ENCODE measurements at regions of chr9 and their contacts with region 1.

Region 1: DNA sequence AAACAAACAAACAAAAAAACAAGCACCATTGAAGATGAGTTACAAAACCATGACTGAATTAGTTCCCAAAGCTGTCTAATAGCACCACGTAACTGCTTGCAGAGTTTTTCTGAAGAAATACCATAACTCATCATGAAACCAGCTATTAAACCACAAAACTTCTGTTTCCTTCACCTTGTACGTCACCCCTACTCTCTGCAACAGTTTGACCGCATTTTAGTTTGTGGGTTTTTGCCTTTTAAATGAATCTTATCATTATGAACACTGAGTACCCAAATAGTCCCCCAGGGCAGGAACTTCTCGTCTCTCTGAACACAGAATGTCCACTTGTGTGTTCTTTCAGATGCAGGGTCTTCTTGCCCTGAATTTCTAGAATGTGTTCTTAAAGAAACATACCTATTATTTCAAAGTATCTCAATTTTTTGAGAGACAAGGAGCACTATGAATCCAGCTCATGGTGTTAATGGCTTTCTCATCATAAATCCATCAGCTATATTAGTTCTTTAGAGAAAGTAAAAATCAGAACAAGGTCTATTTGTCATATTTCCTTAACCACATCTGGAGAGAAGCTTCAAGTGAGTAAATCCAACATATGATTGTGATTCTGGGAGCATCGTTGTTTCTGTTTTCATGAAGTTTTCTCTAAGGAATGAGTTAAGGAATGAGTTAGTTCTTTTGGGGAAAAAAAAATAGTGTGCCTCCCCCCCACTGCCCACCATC is 210.6 kb downstream of the AUH start:
- DNase-seq: peak in 8 of 9 donors; percentile 44 to 82 (median 71)
- ATAC-seq: peak; percentile 88
- H3K4me3 ChIP-seq: peak overlapping the region; percentile 17
- H3K4me3 Mint-ChIP-seq: peak overlapping the region; percentile 3 to 68 (median 50)
- H3K27ac ChIP-seq: no peak overlapping the region
- H3K27ac Mint-ChIP-seq: peak overlapping the region in 6 of 9 donors; percentile 44 to 93 (median 72)
- H3K4me1 ChIP-seq: peaks cover 17 to 24% of the 10 kb centered on the region in 2 donors
- H3K4me1 Mint-ChIP-seq: peaks cover 25 to 89% (median 35%) of the 10 kb centered on the region in 7 donors
- H3K27me3 ChIP-seq: no peaks in the 10 kb centered on the region
- H3K27me3 Mint-ChIP-seq: no peaks in the 10 kb centered on the region

Region 2: GRCh38 chr9:90165281-90165680 is 985.9 kb before region 1 on chr9:
- CTCF ChIA-PET with region 1: no interaction called
- POLR2A ChIA-PET with region 1: no interaction called
- intact Hi-C with region 1: no loop called
- DNase-seq: no peak
- ATAC-seq: no peak
- H3K4me3 ChIP-seq: no peak overlapping the region
- H3K4me3 Mint-ChIP-seq: no peak overlapping the region
- H3K27ac ChIP-seq: no peak overlapping the region
- H3K27ac Mint-ChIP-seq: no peak overlapping the region
- H3K4me1 ChIP-seq: no peaks in the 10 kb centered on the region
- H3K4me1 Mint-ChIP-seq: peaks cover 0 to 5% (median 0%) of the 10 kb centered on the region in 7 donors
- H3K27me3 ChIP-seq: no peaks in the 10 kb centered on the region
- H3K27me3 Mint-ChIP-seq: peaks cover 0 to 14% (median 4%) of the 10 kb centered on the region in 5 donors

Region 3: DNA sequence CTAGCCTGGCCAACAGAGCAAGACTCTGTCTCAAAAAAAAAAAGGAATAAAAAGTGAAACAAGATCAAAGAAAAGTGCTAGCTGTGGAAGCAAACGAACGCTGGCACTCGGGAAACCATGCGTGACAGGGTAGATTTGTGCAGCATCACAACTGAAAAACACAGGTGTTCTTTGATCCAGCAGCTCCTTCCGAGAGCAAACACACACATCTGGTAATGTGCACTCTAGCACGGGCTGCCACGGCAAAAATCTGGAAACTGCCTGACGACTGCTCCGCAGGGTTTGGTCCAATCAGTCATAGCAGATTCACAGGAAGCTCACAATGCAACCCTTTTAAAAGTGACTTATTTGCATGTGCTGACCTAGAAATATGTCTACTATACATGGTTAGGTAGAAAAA is 269.5 kb before region 1 on chr9:
- CTCF ChIA-PET with region 1: no interaction called
- POLR2A ChIA-PET with region 1: no interaction called
- intact Hi-C with region 1: no loop called
- DNase-seq: no peak
- ATAC-seq: no peak
- H3K4me3 ChIP-seq: no peak overlapping the region
- H3K4me3 Mint-ChIP-seq: no peak overlapping the region
- H3K27ac ChIP-seq: no peak overlapping the region
- H3K27ac Mint-ChIP-seq: no peak overlapping the region
- H3K4me1 ChIP-seq: no peaks in the 10 kb centered on the region
- H3K4me1 Mint-ChIP-seq: no peaks in the 10 kb centered on the region
- H3K27me3 ChIP-seq: no peaks in the 10 kb centered on the region
- H3K27me3 Mint-ChIP-seq: peaks cover 0 to 4% (median 0%) of the 10 kb centered on the region in 5 donors

Region 4: GRCh38 chr9:90921111-90921510 is 230.0 kb before region 1 on chr9:
- CTCF ChIA-PET with region 1: no interaction called
- POLR2A ChIA-PET with region 1: no interaction called
- intact Hi-C with region 1: no loop called
- DNase-seq: no peak
- ATAC-seq: no peak
- H3K4me3 ChIP-seq: no peak overlapping the region
- H3K4me3 Mint-ChIP-seq: no peak overlapping the region
- H3K27ac ChIP-seq: no peak overlapping the region
- H3K27ac Mint-ChIP-seq: no peak overlapping the region
- H3K4me1 ChIP-seq: no peaks in the 10 kb centered on the region
- H3K4me1 Mint-ChIP-seq: peaks cover 0 to 1% (median 0%) of the 10 kb centered on the region in 7 donors
- H3K27me3 ChIP-seq: no peaks in the 10 kb centered on the region
- H3K27me3 Mint-ChIP-seq: peaks cover 8 to 22% (median 17%) of the 10 kb centered on the region in 5 donors

Region 5: GRCh38 chr9:90985631-90986030 is 165.5 kb before region 1 on chr9:
- CTCF ChIA-PET with region 1: no interaction called
- POLR2A ChIA-PET with region 1: no interaction called
- intact Hi-C with region 1: no loop called
- DNase-seq: no peak
- ATAC-seq: no peak
- H3K4me3 ChIP-seq: no peak overlapping the region
- H3K4me3 Mint-ChIP-seq: no peak overlapping the region
- H3K27ac ChIP-seq: no peak overlapping the region
- H3K27ac Mint-ChIP-seq: no peak overlapping the region
- H3K4me1 ChIP-seq: no peaks in the 10 kb centered on the region
- H3K4me1 Mint-ChIP-seq: peaks cover 0 to 3% (median 0%) of the 10 kb centered on the region in 7 donors
- H3K27me3 ChIP-seq: no peaks in the 10 kb centered on the region
- H3K27me3 Mint-ChIP-seq: peaks cover 0 to 9% (median 5%) of the 10 kb centered on the region in 5 donors

Region 6: GRCh38 chr9:91047993-91048607 is 103.1 kb before region 1 on chr9:
- CTCF ChIA-PET with region 1: no interaction called
- POLR2A ChIA-PET with region 1: no interaction called
- intact Hi-C with region 1: loop called in 1 of 2 experiments (anchors 1 kb)
- DNase-seq: peak in 1 of 9 donors; percentile 39
- ATAC-seq: peak; percentile 14
- H3K4me3 ChIP-seq: no peak overlapping the region
- H3K4me3 Mint-ChIP-seq: peak overlapping the region; percentile 55 to 78 (median 66)
- H3K27ac ChIP-seq: no peak overlapping the region
- H3K27ac Mint-ChIP-seq: peak overlapping the region in 6 of 9 donors; percentile 28 to 88 (median 41)
- H3K4me1 ChIP-seq: peaks cover 5 to 7% of the 10 kb centered on the region in 2 donors
- H3K4me1 Mint-ChIP-seq: peaks cover 9 to 55% (median 19%) of the 10 kb centered on the region in 7 donors
- H3K27me3 ChIP-seq: peaks cover 0 to 5% of the 10 kb centered on the region in 2 donors
- H3K27me3 Mint-ChIP-seq: peaks cover 11 to 34% (median 23%) of the 10 kb centered on the region in 5 donors

Region 7: DNA sequence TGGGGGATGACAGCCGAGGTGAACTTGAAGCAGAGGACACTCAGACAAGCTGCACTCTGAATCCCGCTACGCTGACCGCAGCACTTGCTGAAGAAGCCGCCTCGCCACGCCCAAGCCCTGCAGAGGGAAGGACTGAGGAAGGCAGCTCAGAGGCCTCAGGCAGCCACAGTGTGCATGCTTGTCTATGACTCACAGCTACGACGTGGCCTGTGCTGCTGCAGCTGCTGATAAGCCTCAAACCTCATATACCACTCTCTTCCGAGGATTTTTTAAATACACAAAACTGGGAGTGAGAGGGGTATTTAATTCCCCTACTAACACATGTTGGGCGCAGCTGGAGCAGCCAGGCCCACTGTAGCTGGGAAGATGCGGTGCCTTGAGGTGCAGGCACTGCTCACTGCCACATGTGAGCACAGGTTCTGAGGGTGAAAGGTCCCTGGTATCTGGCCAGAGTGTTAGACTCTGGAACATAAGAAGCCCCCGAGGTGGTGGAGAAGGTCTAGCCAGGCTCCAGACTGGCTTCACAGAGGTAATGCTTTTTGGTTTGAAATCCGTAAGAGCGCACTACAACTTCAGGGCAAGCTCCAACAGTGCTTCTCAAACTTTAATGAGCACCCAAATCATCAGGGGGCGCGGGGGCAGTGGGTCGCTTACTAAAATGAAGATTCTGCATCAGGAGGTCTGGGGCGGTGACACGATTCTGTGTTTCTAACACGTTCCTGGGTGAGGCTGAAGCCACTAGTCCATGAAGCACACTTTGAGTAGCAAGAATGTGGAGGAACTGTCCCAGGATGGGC is 13.8 kb after region 1 on chr9:
- CTCF ChIA-PET with region 1: no interaction called
- POLR2A ChIA-PET with region 1: no interaction called
- intact Hi-C with region 1: loop called in 1 of 2 experiments (anchors 1 kb)
- DNase-seq: peak in 1 of 9 donors; percentile 78
- ATAC-seq: peak; percentile 90
- H3K4me3 ChIP-seq: no peak overlapping the region
- H3K4me3 Mint-ChIP-seq: peak overlapping the region in 2 of 10 donors; percentile 6 to 89
- H3K27ac ChIP-seq: no peak overlapping the region
- H3K27ac Mint-ChIP-seq: peak overlapping the region in 2 of 9 donors; percentile 72 to 97
- H3K4me1 ChIP-seq: peaks cover 15 to 38% of the 10 kb centered on the region in 2 donors
- H3K4me1 Mint-ChIP-seq: peaks cover 13 to 63% (median 35%) of the 10 kb centered on the region in 7 donors
- H3K27me3 ChIP-seq: no peaks in the 10 kb centered on the region
- H3K27me3 Mint-ChIP-seq: no peaks in the 10 kb centered on the region

Region 8: DNA sequence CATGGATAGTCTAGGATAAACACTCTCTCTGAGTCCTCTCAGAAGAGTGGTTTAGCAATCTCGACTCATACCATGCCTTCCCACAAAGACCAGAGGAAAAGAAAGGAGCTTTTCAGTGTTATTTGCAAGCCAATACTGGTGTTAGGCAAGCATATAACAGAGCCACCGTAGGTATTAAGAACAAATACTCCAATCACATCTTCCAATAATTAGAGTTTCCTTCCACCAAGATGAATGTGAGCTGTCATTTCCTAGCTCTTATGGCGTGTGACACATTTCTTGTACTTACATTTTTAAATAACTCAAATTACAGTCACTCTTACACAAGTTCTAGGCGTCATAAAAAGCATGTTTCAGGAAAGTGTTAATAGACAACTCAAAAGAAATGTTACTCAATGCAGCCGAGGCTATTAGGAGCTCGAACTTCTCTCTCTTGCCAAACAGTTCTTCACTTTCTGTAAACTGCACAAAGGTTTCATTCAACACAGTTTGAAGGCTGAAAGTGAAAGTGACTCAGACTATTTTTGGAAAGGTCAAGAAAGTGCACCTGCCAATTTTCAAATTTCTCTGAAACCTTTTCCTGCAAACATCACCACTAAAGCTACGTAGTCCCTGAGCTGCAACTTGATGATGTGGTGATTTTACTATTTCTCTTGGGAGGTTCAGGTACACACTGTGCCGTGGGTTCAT is 56.7 kb after region 1 on chr9:
- CTCF ChIA-PET with region 1: no interaction called
- POLR2A ChIA-PET with region 1: no interaction called
- intact Hi-C with region 1: loop called in 1 of 2 experiments (anchors 1 kb)
- DNase-seq: peak in 5 of 9 donors; percentile 13 to 24 (median 21)
- ATAC-seq: peak; percentile 74
- H3K4me3 ChIP-seq: peak overlapping the region; percentile 4
- H3K4me3 Mint-ChIP-seq: peak overlapping the region; percentile 49 to 89 (median 80)
- H3K27ac ChIP-seq: peak overlapping the region; percentile 31
- H3K27ac Mint-ChIP-seq: peak overlapping the region; percentile 52 to 91 (median 83)
- H3K4me1 ChIP-seq: peaks cover 17 to 18% of the 10 kb centered on the region in 2 donors
- H3K4me1 Mint-ChIP-seq: peaks cover 13 to 61% (median 37%) of the 10 kb centered on the region in 7 donors
- H3K27me3 ChIP-seq: no peaks in the 10 kb centered on the region
- H3K27me3 Mint-ChIP-seq: no peaks in the 10 kb centered on the region

Measured in naive thymus-derived CD4-positive, alpha-beta T cell (primary cell).